ENCODE measurements at regions of chr2 and their contacts with region 1.

Region 1: GRCh38 chr2:47198985-47199451 is 43.9 kb upstream of the STPG4 start:
- DNase-seq: peak; percentile 96
- ATAC-seq: peak; percentile 63
- H3K4me3 ChIP-seq: no peak overlapping the region
- H3K27ac ChIP-seq: peak overlapping the region; percentile 55
- H3K4me1 ChIP-seq: peaks cover 70% of the 10 kb centered on the region
- H3K27me3 ChIP-seq: no peaks in the 10 kb centered on the region
- CTCF ChIP-seq: no peak

Region 2: DNA sequence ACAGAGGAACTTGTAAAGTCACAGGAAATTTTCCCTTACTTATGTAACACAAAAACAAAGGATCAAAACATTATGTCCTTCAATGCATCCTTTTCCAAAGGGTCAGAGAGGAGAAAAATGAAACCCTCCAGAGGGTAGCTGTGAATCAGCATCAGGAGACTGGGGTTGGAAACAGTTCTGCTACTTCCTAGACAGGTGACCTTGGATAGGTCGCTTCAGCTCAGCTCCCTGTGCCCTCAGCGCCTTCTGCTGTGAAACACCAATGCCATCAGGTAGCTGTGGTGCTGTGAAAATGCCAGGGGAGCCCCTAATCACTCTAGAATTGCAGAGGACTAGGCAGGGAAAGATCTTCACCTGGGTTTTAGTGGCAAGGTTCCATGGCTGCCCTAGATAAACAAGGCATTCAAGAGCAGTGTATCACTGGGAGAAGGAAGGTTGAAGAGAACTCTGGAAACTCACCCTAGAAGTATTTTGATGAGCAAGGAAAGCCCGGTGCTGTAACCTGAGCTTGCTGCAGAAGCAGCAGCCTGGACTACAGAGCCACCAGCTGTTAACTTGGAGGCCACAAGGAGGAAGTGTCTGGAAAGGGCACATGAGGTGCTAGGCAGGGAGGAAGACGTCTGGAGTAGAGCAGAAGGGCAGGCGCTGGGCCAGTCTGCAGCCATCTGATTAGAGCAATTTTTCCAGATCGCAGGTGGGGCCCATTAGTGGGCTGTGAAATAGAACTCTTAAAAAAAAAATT is 182.7 kb before region 1 on chr2:
- CTCF ChIA-PET with region 1: no interaction called
- POLR2A ChIA-PET with region 1: no interaction called
- intact Hi-C with region 1: loop called (anchors 1 kb)
- DNase-seq: peak; percentile 95
- ATAC-seq: peak; percentile 97
- H3K4me3 ChIP-seq: no peak overlapping the region
- H3K27ac ChIP-seq: peak overlapping the region; percentile 61
- H3K4me1 ChIP-seq: peaks cover 27% of the 10 kb centered on the region
- H3K27me3 ChIP-seq: no peaks in the 10 kb centered on the region
- CTCF ChIP-seq: peak; percentile 46

Region 3: GRCh38 chr2:47214990-47215389 is 16.0 kb after region 1 on chr2:
- CTCF ChIA-PET with region 1: no interaction called
- POLR2A ChIA-PET with region 1: no interaction called
- intact Hi-C with region 1: no loop called
- DNase-seq: no peak
- ATAC-seq: no peak
- H3K4me3 ChIP-seq: no peak overlapping the region
- H3K27ac ChIP-seq: no peak overlapping the region
- H3K4me1 ChIP-seq: no peaks in the 10 kb centered on the region
- H3K27me3 ChIP-seq: no peaks in the 10 kb centered on the region
- CTCF ChIP-seq: no peak

Region 4: GRCh38 chr2:47272031-47272864 is 73.2 kb after region 1 on chr2:
- CTCF ChIA-PET with region 1: interaction called, 3 read pairs
- POLR2A ChIA-PET with region 1: no interaction called
- intact Hi-C with region 1: loop called (anchors 1 kb)
- DNase-seq: peak; percentile 70
- ATAC-seq: peak; percentile 62
- H3K4me3 ChIP-seq: peak overlapping the region; percentile 63
- H3K27ac ChIP-seq: peak overlapping the region; percentile 87
- H3K4me1 ChIP-seq: peaks cover 47% of the 10 kb centered on the region
- H3K27me3 ChIP-seq: no peaks in the 10 kb centered on the region
- CTCF ChIP-seq: peak; percentile 96

Region 5: GRCh38 chr2:47798631-47799030 is 599.6 kb after region 1 on chr2:
- CTCF ChIA-PET with region 1: no interaction called
- POLR2A ChIA-PET with region 1: interaction called, 40 read pairs
- intact Hi-C with region 1: no loop called
- DNase-seq: no peak
- ATAC-seq: no peak
- H3K4me3 ChIP-seq: no peak overlapping the region
- H3K27ac ChIP-seq: no peak overlapping the region
- H3K4me1 ChIP-seq: no peaks in the 10 kb centered on the region
- H3K27me3 ChIP-seq: no peaks in the 10 kb centered on the region
- CTCF ChIP-seq: no peak

Measured in PC-3 (cell line).